ENCODE measurements at regions of chr19 and their contacts with region 1.

Region 1: DNA sequence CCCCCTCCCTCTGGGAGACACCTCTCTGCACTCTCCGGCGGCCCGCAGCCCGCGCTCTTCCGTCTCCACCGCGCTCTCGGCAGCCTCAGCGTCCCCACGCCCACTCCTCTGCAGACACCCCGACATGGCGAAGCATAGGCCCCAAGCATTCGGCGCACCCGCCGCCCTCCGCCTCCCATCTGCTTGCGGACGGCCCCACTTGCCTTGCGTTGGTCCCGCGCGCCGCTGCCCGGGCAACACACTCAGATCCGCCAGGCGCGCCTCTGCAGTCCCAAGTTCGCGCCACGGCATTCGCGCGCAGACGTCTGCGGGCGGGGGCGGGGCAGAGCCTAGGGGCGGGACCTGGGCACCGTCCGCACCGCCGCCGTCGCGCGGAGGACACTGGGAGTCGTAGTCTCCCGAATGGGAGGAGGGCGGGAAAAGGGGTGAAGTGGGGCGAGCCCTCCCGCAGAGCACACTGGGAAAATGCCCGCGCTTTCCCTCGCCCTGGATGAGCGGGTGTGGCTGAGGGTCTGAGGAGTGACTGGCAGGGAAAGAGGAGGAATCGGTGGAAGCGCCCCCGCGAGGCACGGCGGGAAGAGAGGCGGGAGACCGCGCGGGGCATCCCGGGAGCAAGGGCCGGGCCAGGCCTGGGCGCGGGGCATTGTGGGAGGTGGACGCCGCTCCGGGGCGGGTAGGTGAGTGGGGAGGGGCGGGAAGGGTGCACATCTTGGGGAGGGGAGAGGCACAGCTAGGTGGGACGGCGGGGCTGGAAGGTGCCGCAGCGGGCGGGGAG is at the starts of genes LIG1 and ZSWIM9:
- DNase-seq: peak; percentile 97
- H3K4me3 Mint-ChIP-seq: peak within 1 kb of the TSS; percentile 98
- H3K27ac Mint-ChIP-seq: peak within 1 kb of the TSS; percentile 96
- H3K4me1 Mint-ChIP-seq: peaks cover 34% of the 10 kb centered on the region
- H3K27me3 Mint-ChIP-seq: no peaks in the 10 kb centered on the region
- total RNA-seq, gene LIG1: 138 and 144 TPM in 2 replicates
- total RNA-seq, gene ZSWIM9: 8.0 and 9.9 TPM in 2 replicates

Region 2: DNA sequence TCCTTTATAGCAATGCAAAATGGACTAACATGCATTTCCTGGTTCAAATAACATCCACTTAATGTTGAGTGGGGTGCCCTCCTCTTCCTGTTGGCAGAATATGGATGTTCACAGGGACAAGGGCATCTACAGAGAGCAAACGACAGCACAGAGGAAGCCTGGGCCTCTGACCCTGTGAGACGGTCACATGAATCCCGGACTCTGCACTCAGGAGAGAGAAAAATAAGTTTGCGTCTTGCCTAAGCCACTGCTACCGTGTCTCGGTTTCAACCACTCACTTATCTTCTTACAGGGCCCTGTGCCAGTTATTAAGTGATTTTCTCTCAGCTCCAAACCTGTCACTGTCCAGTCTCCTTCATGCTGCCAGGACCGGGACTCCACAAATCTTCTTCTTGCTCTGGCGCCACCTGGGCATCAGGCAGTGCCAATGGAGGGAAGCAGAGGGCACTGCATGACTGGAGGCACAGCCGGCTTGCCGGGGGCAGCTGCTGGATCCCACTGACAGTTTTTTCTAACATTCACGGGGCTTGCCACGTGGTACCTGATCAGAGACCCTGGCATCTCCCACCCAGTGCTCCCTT is 11.9 kb before region 1 on chr19:
- intact Hi-C with region 1: no loop called
- DNase-seq: no peak
- H3K4me3 Mint-ChIP-seq: no peak overlapping the region
- H3K27ac Mint-ChIP-seq: no peak overlapping the region
- H3K4me1 Mint-ChIP-seq: peaks cover 2% of the 10 kb centered on the region
- H3K27me3 Mint-ChIP-seq: no peaks in the 10 kb centered on the region

Region 3: GRCh38 chr19:48203732-48204628 is 33.8 kb after region 1 on chr19:
- intact Hi-C with region 1: loop called (anchors 1 kb)
- DNase-seq: peak; percentile 98
- H3K4me3 Mint-ChIP-seq: no peak overlapping the region
- H3K27ac Mint-ChIP-seq: no peak overlapping the region
- H3K4me1 Mint-ChIP-seq: peaks cover 14% of the 10 kb centered on the region
- H3K27me3 Mint-ChIP-seq: no peaks in the 10 kb centered on the region

Measured in activated CD4-positive, alpha-beta T cell treated with anti-CD3 and anti-CD28 coated beads, Interleukin-2, amount 10 ng/mL, durations not matched to agents 24 days and 14 days (primary cell).